IMR-90 (cell line): ENCODE measurements at regions of chr3 and their contacts with region 1.

Region 1: GRCh38 chr3:32510075-32510724 is 7.5 kb upstream of the CMTM6 start:
- DNase-seq: peak; percentile 71
- ATAC-seq: peak; percentile 97
- H3K4me3 ChIP-seq: no peak overlapping the region
- H3K27ac ChIP-seq: no peak overlapping the region
- H3K4me1 ChIP-seq: no peaks in the 10 kb centered on the region
- H3K27me3 ChIP-seq: no peaks in the 10 kb centered on the region
- CTCF ChIP-seq: peak; percentile 89
- POLR2A ChIP-seq: peak; percentile 55; the same call in 1 of the 2 replicates
- RAD21 ChIP-seq: peak; percentile 98

Region 2: DNA sequence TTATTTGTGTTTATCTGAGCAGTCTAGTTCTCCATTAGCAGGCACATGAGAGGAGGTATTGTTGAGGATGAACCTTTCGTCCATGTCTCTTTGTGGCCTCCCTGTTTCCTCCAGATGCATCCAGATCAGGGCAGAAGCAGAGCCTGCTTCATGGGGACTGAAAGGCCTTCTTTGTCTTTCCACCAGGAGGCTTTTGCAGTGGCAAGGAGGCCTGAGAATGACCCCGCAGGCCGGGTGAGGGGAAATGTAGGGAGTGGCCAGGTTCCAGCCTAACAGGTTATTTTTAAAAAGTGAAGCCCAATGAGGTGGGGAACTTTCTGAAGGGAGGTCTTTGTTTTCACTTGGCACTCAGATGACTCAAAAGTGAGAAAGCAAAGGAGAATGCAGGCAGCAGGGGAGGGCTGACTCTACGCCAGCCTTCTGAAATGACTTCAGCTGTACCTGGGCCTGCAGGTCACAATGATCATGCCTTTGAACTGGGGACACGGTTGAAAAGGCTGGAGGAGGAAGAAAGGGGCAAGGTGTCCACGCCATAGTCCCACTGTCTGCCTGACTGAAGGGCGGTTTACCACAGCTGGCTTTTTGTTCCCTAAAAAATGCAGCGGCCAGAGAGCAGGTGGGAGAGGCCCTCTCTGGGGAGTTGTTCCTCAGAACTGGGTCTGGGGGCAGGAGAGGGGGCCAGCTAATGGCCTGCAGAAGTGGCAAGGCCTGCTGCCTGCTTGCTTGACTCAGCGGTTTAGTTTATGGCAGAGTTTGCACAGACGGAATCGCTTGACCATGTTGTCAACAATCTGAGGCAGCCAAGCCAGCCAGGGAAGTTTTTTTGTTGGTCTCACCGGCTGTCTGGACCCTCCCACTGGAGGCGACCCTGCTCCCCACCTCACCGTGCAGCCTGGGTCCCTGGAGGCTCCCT is 89.8 kb before region 1 on chr3:
- CTCF ChIA-PET with region 1: no interaction called
- POLR2A ChIA-PET with region 1: no interaction called
- dilution Hi-C with region 1: no loop called
- in situ Hi-C with region 1: no loop called
- intact Hi-C with region 1: no loop called
- DNase-seq: peak; percentile 62
- ATAC-seq: peak; percentile 45
- H3K4me3 ChIP-seq: no peak overlapping the region
- H3K27ac ChIP-seq: no peak overlapping the region
- H3K4me1 ChIP-seq: peaks cover 16% of the 10 kb centered on the region
- H3K27me3 ChIP-seq: no peaks in the 10 kb centered on the region
- CTCF ChIP-seq: no peak
- POLR2A ChIP-seq: no peak
- RAD21 ChIP-seq: no peak

Region 3: GRCh38 chr3:32551087-32551486 is 40.9 kb after region 1 on chr3:
- CTCF ChIA-PET with region 1: no interaction called
- POLR2A ChIA-PET with region 1: no interaction called
- dilution Hi-C with region 1: no loop called
- in situ Hi-C with region 1: no loop called
- intact Hi-C with region 1: no loop called
- DNase-seq: no peak
- ATAC-seq: no peak
- H3K4me3 ChIP-seq: no peak overlapping the region
- H3K27ac ChIP-seq: no peak overlapping the region
- H3K4me1 ChIP-seq: peaks cover 2% of the 10 kb centered on the region; the same call in 1 of the 2 replicates
- H3K27me3 ChIP-seq: no peaks in the 10 kb centered on the region
- CTCF ChIP-seq: no peak
- POLR2A ChIP-seq: no peak
- RAD21 ChIP-seq: no peak

Region 4: DNA sequence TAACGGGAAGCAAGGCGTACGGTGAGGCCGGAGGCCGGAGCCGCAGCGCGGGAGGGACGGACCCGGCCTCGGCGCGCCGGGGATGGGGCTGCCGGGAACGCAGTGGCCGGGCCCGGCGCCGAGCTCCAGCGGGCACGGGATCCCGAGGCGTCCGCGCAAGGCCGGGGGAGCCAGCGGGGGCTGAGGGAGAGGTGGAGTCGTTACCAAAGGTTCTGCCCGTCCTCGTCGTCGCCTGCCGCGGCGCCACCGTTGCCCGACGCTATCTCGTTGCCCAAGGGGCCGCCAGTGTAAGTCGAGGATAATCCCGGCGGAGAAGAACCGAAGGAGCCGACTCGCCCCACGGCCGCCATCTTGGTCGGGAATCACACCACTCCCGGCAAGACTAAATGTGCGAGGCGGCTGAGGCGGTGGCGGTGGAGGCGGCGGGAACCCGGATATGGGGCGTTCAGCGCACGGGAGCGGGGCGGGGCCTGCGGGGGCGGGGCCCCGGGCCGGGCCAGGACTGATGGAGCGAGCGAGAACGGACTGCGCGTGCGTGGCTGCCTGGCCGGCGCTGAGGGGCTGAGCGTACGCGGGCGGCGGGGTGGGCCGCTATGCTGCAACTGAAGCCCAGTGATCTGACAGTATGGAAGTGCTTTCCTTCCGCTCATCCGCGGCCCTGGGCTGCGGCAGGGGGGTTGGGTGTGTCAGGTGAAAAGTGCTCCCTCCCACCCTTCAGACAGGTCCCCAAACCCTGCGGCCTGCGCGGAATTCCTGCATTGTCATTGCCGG is 60.4 kb after region 1 on chr3 and contains the start of gene DYNC1LI1:
- CTCF ChIA-PET with region 1: no interaction called
- POLR2A ChIA-PET with region 1: no interaction called
- dilution Hi-C with region 1: no loop called
- in situ Hi-C with region 1: no loop called
- intact Hi-C with region 1: loop called (anchors 2 kb)
- DNase-seq: peak; percentile 87
- ATAC-seq: peak; percentile 96
- H3K4me3 ChIP-seq: peak within 1 kb of the TSS; percentile 90
- H3K27ac ChIP-seq: peak within 1 kb of the TSS; percentile 98
- H3K4me1 ChIP-seq: peaks cover 1% of the 10 kb centered on the region
- H3K27me3 ChIP-seq: no peaks in the 10 kb centered on the region
- CTCF ChIP-seq: no peak
- POLR2A ChIP-seq: peak; percentile 93
- RAD21 ChIP-seq: no peak
- total RNA-seq, gene DYNC1LI1: 30.8 and 45.0 TPM in 2 replicates

Region 5: DNA sequence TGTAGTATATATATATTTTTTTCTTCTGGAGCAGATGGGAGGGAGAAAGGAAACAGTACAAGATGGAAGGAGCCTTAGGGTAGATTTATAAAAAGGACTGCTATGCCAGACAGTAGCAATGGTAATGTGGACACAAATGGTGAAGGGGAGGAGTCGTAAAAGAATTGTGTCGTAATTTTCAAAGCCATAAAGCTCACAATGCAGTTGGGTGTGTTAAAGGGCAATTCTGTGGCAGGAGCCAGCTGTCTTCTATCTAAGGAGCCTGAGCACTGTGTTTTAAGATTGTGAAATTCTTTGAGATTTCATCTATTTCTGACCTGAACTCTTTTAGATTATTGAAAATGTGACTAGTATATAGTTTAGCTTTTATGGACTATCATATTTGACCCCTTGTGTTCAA is 233.7 kb after region 1 on chr3:
- CTCF ChIA-PET with region 1: no interaction called
- POLR2A ChIA-PET with region 1: interaction called, 13 read pairs
- dilution Hi-C with region 1: no loop called
- in situ Hi-C with region 1: no loop called
- intact Hi-C with region 1: no loop called
- DNase-seq: peak; percentile 38
- ATAC-seq: peak; percentile 69
- H3K4me3 ChIP-seq: no peak overlapping the region
- H3K27ac ChIP-seq: no peak overlapping the region
- H3K4me1 ChIP-seq: no peaks in the 10 kb centered on the region
- H3K27me3 ChIP-seq: no peaks in the 10 kb centered on the region
- CTCF ChIP-seq: no peak
- POLR2A ChIP-seq: no peak
- RAD21 ChIP-seq: no peak